Esophagus squamous epithelium (tissue), 5 donors: ENCODE measurements at regions of chr10 and their contacts with region 1.

Region 1: DNA sequence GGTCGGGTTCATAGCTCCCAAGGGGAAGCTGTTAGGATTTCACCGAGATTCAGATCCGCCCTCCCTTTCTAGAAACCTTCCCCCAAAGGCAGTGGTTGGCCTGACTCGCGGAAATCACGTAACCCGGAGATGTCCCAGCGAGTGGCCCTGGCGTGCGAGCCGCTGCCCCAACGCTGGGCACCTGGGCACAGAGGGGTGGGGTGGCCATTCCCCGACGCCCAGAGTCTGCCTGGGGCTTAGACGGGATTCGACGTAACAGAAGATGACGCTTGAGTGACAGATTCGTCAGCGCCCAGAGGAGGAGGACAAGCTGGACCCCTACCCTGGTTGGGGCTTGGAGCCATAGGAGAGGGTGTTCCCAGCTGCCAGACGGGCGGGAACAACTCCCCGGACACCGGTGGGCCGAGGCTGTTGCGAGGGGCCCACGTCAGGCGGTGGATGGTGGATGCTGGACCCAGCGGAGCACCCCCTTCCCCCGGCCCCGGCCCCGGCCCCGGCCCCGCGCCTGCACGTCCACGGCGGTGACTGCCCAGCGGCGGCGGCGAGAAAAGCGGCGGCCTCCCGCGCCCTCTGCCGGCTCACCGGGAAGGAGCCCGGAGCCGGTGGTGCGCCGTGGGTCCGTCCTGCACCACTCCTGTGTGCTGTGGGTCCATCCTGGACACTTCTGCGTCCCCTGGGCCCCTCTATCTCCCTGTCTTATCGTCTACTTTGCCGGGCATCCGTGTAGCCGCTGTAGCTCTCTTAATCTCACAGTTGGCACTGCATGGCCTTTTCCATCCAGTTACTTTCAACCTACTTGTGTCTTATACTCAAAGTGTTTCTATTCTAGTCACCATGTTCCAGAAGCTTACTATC is 35.4 kb upstream of the KNDC1 start:
- DNase-seq: no peak
- H3K4me3 ChIP-seq: no peak overlapping the region
- H3K27ac ChIP-seq: no peak overlapping the region
- H3K4me1 ChIP-seq: no peaks in the 10 kb centered on the region
- H3K27me3 ChIP-seq: peaks cover 0 to 46% (median 0%) of the 10 kb centered on the region in 4 donors
- CTCF ChIP-seq: peak in 5 of 6 experiments; percentile 38 to 64 (median 42)
- POLR2A ChIP-seq: no peak

Region 2: DNA sequence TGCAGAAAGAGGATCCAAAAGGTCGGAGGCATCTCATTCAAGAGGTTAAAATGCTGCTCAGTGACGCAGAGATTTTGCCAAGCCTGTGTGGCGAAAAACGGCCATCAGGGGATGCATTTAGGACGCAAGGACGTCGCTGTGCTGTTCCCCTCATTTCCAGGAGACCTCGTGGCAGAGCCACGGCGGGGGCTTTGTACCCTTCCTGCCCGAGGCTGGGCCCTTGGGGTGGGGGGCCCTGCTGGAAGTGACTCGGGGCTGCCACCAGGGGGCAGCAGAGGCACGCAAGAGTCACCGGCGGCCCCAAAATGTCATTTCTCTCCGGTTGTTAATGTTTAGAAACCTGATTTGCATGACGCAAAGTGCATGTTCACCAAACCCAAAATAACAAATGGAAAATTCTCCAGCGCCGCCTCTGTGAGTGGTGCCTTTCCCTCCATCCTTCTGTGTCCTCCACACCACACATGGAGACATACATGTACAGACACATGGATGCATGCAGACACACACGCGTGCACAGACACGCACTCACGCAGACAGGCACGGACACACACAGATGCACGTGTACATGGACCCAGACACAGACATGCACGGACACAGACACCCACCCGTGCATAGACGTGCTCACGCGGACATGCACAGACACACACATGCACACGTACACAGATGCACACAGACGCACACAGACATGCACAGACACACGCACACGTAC is 287.6 kb before region 1 on chr10:
- intact Hi-C with region 1: loop called (anchors 5 kb)
- DNase-seq: no peak
- H3K4me3 ChIP-seq: no peak overlapping the region
- H3K27ac ChIP-seq: no peak overlapping the region
- H3K4me1 ChIP-seq: peaks cover 0 to 10% (median 0%) of the 10 kb centered on the region in 3 donors
- H3K27me3 ChIP-seq: peaks cover 0 to 83% (median 0%) of the 10 kb centered on the region in 4 donors
- CTCF ChIP-seq: peak; percentile 86 to 96 (median 94)
- POLR2A ChIP-seq: no peak

Region 3: DNA sequence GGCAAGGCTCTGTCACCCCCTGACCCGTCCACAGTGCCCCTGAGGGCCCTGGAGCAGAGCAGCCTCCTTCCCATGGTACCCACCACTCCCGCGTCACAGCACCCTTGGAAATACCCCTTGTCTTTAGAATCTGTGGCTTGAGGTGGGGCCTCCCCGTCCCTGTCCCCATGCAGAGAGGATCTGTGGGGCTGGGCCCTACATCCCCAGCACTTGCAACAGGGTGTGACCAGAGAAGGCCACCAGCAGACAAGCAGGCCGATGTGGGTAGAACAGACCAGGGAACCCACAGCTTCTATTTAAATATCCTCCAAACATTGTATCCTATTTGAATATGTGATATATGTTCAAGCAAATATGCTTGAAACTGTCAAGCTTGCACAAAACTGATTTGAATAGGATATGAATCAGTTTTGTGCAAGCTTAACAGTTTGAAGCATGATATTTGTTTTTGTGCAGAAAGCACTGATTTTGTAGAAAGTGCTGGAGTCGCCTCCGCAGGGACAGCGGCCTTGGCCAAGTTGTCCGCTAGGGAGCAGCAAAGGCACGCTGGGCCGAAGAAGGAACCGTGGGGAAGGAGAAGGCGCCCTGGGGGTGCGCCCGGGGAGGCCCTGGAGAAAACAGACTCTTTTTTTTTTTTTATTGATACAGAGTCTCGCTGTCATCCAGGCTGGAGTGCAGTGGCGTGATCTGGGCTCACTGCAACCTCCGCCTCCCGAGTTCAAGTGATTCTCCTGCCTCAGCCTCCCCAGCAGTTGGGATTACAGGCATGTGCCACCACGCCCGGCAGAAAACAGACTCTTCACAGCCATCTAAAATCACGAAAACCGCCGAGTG is 184.4 kb before region 1 on chr10:
- intact Hi-C with region 1: loop called (anchors 10 kb)
- DNase-seq: no peak
- H3K4me3 ChIP-seq: no peak overlapping the region
- H3K27ac ChIP-seq: no peak overlapping the region
- H3K4me1 ChIP-seq: peaks cover 11 to 15% (median 12%) of the 10 kb centered on the region in 3 donors
- H3K27me3 ChIP-seq: peaks cover 7 to 78% (median 9%) of the 10 kb centered on the region in 4 donors
- CTCF ChIP-seq: peak; percentile 27 to 80 (median 62)
- POLR2A ChIP-seq: no peak

Region 4: DNA sequence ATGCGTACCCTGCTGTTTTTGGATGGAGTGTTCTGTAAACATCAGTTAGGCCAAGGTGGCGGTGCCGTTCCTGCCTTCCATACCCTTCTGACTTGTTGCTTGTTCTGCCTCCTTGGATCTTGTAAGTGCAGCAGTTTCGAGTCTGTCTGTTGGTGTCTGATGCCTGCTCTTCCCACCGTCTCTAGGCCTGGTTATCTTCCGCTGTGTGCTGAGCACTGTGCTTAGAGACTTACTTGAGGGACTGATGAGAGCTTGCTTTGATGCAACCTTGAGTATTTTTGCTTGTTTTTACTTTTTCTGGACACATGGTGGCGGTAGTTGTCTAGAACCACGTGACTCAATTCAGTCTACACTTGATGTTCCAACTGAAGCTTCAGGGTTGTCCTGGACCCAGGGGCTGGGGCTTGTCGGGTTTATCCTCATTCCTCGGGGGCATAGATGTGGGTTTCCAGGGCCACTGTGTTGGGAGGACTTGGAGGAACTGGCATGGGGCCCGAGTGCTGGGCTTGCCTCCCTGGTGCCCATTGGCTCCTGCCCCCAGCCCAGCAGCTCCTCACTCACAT is 314.2 kb after region 1 on chr10:
- intact Hi-C with region 1: no loop called
- DNase-seq: no peak
- H3K4me3 ChIP-seq: no peak overlapping the region
- H3K27ac ChIP-seq: no peak overlapping the region
- H3K4me1 ChIP-seq: no peaks in the 10 kb centered on the region
- H3K27me3 ChIP-seq: no peaks in the 10 kb centered on the region
- CTCF ChIP-seq: peak in 1 of 6 experiments; percentile 41
- POLR2A ChIP-seq: no peak

Region 5: DNA sequence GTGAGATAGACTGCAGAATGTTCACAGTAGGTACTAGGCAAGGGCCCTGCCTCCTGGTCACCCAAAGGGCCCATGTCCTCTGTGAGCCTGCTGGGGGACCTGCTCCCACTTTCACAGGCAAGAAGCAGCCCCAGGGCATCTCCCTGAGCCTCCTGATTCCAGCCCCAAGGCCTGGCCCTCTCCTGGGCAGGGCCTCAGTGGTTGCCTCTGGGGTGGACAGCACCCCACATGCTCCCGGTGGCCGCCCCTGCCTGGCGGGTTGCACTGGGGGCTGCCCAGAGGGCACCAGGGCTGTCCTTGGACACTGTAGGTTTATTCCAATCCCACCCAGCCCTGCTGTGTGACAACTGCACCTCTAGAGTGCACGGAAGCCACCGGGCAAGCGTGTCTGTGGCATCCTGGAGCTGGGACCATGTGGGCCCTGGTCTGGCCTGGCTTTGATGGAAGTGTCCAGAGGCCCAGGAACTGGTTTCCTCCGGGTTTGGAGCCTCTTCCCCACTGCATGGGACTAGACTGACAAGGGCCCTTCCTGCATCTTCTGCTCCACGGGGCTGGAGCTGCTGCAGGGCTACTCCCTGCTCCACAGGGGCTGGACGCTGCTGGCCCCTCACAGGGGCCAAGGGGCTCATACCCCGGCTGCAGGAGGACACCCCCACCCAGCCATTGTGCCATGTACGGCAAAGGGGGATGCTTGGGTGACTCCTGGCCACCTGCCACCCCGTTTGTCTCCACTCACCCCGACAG is 465.8 kb after region 1 on chr10:
- intact Hi-C with region 1: no loop called
- DNase-seq: no peak
- H3K4me3 ChIP-seq: no peak overlapping the region
- H3K27ac ChIP-seq: no peak overlapping the region
- H3K4me1 ChIP-seq: no peaks in the 10 kb centered on the region
- H3K27me3 ChIP-seq: peaks cover 0 to 53% (median 0%) of the 10 kb centered on the region in 4 donors
- CTCF ChIP-seq: no peak
- POLR2A ChIP-seq: no peak